ENCODE measurements at regions of chr6 and their contacts with region 1.

Region 1: DNA sequence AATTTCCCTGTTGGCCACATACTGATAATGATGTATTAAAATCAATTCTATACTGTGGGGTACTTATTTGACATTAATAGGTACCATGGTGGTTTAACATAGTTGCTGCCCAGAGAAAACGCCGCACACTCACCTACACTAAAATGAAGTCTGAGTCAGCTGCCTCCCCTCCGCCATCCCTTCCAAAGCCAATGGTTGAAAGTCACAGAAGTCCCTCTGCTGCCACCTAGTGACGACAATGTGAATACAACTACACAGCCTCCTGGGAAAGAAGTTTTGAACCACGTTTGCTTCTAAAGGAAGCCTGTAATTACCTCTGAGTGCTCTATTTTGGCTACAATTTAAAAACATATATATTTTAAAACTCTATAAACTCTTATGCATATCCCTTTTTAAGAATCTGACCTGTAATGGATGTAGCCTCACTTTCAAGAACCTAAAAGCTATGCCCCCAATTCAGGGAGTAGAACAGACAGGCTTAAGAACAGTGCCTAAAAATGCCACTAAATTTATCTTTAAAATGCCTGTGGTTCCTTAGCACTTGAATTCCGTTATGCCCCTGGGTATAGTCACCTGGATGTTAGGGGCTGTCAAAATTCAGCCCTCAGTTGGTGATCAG is 20.6 kb upstream of the ECI2 start:
- DNase-seq: peak; percentile 86
- H3K4me3 ChIP-seq: no peak overlapping the region
- H3K27ac ChIP-seq: no peak overlapping the region
- H3K4me1 ChIP-seq: no peaks in the 10 kb centered on the region
- H3K27me3 ChIP-seq: no peaks in the 10 kb centered on the region
- CTCF ChIP-seq: peak; percentile 68 to 84 (median 75)
- EP300 ChIP-seq: no peak
- POLR2A ChIP-seq: no peak

Region 2: DNA sequence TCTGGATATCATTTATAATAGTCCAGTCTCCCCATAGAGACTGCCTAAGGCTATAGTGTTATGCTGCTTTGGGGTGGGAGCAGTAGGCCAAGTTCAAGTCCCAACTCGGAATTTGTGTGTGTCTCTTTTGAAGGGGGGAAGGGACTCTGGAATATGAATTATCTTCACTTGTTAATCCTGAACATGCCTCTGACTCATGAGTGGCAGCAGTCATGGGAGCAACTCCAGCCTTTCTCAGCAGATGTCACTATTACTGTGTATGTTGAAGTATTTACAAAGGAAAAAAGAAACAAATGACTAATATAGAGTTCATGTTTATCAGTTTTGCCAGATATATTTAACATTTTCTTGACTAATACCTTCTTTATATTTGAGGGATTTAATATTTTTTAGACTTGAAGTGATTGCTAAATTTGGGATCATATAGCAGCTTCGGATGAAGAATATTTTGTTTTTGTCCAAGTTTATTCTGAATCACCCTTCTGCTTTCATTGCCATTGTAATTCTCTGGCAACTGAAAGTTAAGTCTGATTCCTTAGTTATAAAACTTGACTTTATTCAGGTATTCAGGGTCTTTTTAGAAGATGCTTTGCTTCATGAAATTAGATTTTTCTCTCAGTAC is 100.4 kb before region 1 on chr6:
- intact Hi-C with region 1: loop called (anchors 5 kb)
- DNase-seq: no peak
- H3K4me3 ChIP-seq: no peak overlapping the region
- H3K27ac ChIP-seq: no peak overlapping the region
- H3K4me1 ChIP-seq: peaks cover 0 to 5% (median 0%) of the 10 kb centered on the region in 4 donors
- H3K27me3 ChIP-seq: no peaks in the 10 kb centered on the region
- CTCF ChIP-seq: no peak
- EP300 ChIP-seq: no peak
- POLR2A ChIP-seq: no peak

Region 3: GRCh38 chr6:4135665-4136353 is 20.1 kb before region 1 on chr6:
- intact Hi-C with region 1: loop called (anchors 2 kb)
- DNase-seq: peak; percentile 100
- H3K4me3 ChIP-seq: peak overlapping the region; percentile 66 to 93 (median 80)
- H3K27ac ChIP-seq: peak overlapping the region; percentile 90 to 97 (median 93)
- H3K4me1 ChIP-seq: peaks cover 0 to 24% (median 21%) of the 10 kb centered on the region in 4 donors
- H3K27me3 ChIP-seq: no peaks in the 10 kb centered on the region
- CTCF ChIP-seq: peak in 1 of 4 experiments; percentile 9
- EP300 ChIP-seq: no peak
- POLR2A ChIP-seq: peak in 1 of 2 donors; percentile 22